ENCODE measurements at regions of chr5 and their contacts with region 1.

Region 1: DNA sequence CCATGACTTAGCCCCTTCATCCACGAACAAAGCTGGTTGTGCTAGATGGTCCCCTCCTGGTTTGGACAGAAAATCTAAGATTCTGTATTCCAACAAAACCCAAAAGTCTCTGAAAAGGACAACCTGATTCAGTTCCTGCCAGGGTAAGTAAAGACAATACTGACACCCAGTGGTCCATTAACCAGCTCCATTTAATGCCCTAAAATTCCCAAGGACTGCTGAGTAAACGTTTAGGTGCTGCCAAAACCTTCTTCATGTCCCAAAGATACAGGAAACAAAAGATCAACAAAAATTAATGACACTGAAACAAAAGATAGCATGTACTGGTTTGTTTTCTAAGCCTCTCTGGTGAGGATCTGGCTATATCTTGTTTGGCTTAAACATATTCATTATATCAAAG is 25.3 kb upstream of the PPP1R2B start:
- DNase-seq: no peak
- ATAC-seq: no peak
- H3K4me3 ChIP-seq: no peak overlapping the region
- H3K27ac ChIP-seq: no peak overlapping the region
- H3K4me1 ChIP-seq: peaks cover 11% of the 10 kb centered on the region
- H3K27me3 ChIP-seq: no peaks in the 10 kb centered on the region
- CTCF ChIP-seq: peak; percentile 4 to 45 (median 19); a peak in 2 of 6 replicates
- EP300 ChIP-seq: no peak
- POLR2A ChIP-seq: no peak
- RAD21 ChIP-seq: peak; percentile 49

Region 2: DNA sequence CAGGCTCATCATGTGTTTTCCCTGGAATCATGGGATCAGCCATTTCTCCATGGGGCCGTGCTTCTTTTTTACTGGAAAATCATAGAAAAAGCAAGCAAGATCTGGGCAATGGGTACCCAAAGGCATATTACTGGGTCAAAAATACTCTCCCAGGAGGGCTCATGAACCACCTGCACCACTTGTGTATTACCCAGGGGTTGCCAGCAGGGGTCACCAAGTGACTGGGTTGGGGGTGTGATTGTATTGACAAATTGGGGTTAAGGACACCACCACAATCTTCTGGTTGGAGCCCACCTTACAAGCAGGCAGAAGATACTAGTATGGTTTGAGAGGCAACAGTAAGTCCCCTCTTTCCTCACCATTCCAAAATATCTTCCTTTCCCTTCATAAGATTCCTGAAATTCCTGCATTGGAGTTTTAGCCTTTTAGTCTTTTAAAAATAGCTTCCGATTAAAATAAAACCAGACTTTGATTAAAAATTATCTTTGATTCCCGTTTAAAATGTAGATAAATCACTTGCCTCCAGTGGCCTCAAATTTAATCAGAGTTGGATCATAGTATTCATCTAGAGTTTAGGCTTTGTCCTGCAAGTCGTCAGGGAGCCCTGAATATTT is 1207.9 kb before region 1 on chr5:
- CTCF ChIA-PET with region 1: no interaction called
- POLR2A ChIA-PET with region 1: no interaction called
- RAD21 ChIA-PET with region 1: no interaction called
- SMC1A ChIA-PET with region 1: interaction called, 3 read pairs
- in situ Hi-C with region 1: no loop called
- intact Hi-C with region 1: loop called (anchors 5 kb)
- DNase-seq: no peak
- ATAC-seq: peak; percentile 84
- H3K4me3 ChIP-seq: no peak overlapping the region
- H3K27ac ChIP-seq: no peak overlapping the region
- H3K4me1 ChIP-seq: no peaks in the 10 kb centered on the region
- H3K27me3 ChIP-seq: no peaks in the 10 kb centered on the region
- CTCF ChIP-seq: peak; percentile 65 to 80 (median 73)
- EP300 ChIP-seq: no peak
- POLR2A ChIP-seq: no peak
- RAD21 ChIP-seq: peak; percentile 87